HEK293 (cell line): ENCODE measurements at regions of chr4 and their contacts with region 1.

Region 1: GRCh38 chr4:42282081-42282901 is 115.0 kb upstream of the SHISA3 start:
- H3K4me3 ChIP-seq: no peak overlapping the region
- H3K27ac ChIP-seq: no peak overlapping the region
- H3K4me1 ChIP-seq: no peaks in the 10 kb centered on the region
- CTCF ChIP-seq: peak; percentile 32; the same call in 1 of the 2 replicates

Region 2: GRCh38 chr4:42519803-42520417 is 237.6 kb after region 1 on chr4:
- CTCF ChIA-PET with region 1: interaction called, 35 read pairs
- POLR2A ChIA-PET with region 1: no interaction called
- H3K4me3 ChIP-seq: no peak overlapping the region
- H3K27ac ChIP-seq: no peak overlapping the region
- H3K4me1 ChIP-seq: no peaks in the 10 kb centered on the region
- CTCF ChIP-seq: no peak